ENCODE measurements at regions of chr1 and their contacts with region 1.

Region 1: DNA sequence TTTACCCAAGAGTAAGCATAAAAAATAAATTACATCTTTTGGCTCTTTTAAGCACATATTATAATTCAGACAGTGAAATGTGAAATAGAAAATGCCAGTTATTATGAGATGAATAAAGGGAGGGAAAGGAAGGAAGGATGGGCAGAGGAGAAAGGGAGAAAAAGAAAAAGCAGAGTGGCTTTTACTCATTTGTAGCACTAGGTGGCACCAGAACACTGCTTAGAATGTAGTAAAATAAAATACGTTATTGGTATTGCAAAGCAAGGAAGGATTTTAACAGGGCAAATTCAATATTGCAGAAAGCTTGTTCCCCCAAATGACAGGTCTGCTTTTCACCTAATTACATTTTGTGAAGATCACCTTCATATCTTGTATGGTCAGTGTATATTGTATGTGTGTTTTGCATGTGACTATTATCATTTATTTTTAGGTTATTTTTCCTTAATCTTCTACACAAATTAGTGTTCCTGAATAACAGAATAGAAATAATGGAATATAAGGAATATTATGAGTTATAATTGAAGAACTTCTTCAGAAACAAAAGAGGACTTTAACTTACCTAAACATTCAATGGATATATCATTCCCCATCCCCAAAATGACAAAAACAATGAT is 9.1 kb upstream of the PCNX2 start:
- DNase-seq: no peak
- ATAC-seq: peak; percentile 80
- H3K4me3 ChIP-seq: no peak overlapping the region
- H3K27ac ChIP-seq: no peak overlapping the region
- H3K4me1 ChIP-seq: no peaks in the 10 kb centered on the region
- H3K27me3 ChIP-seq: no peaks in the 10 kb centered on the region
- CTCF ChIP-seq: peak; percentile 68 to 83 (median 69); a peak in 5 of 6 replicates
- POLR2A ChIP-seq: no peak
- RAD21 ChIP-seq: peak; percentile 91

Region 2: DNA sequence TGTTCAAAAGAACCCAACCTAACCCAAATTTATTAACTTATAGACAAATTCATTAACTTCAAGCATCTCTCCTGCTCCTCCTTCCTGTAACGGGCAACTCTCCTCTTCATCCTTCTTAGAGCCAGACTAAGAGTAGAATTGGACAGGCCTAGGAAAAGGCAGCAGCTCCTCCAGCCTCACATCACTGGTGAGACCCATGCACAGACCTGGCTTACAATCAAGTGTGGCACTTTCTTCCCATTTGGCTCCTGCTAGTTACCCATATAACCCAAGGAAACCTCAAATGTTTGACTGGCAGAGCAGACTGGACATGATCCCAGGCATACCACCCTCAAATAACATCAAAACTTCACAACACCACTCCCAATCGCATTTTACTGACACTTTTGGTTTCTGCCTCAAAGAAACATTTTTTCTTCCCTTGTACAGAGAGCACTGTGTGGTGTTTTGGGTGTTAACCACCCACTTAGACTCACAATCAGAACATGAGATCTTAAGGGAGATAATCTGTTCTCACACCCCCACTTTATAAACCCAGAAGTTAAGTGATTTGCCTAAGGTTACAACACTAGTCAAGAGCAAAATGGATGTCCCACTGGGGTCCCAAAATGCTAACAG is 776.0 kb before region 1 on chr1:
- CTCF ChIA-PET with region 1: no interaction called
- POLR2A ChIA-PET with region 1: no interaction called
- RAD21 ChIA-PET with region 1: no interaction called
- intact Hi-C with region 1: no loop called
- DNase-seq: no peak
- ATAC-seq: no peak
- H3K4me3 ChIP-seq: no peak overlapping the region
- H3K27ac ChIP-seq: no peak overlapping the region
- H3K4me1 ChIP-seq: peaks cover 18 to 42% of the 10 kb centered on the region in 2 experiments
- H3K27me3 ChIP-seq: no peaks in the 10 kb centered on the region
- CTCF ChIP-seq: no peak
- POLR2A ChIP-seq: no peak
- RAD21 ChIP-seq: no peak

Region 3: DNA sequence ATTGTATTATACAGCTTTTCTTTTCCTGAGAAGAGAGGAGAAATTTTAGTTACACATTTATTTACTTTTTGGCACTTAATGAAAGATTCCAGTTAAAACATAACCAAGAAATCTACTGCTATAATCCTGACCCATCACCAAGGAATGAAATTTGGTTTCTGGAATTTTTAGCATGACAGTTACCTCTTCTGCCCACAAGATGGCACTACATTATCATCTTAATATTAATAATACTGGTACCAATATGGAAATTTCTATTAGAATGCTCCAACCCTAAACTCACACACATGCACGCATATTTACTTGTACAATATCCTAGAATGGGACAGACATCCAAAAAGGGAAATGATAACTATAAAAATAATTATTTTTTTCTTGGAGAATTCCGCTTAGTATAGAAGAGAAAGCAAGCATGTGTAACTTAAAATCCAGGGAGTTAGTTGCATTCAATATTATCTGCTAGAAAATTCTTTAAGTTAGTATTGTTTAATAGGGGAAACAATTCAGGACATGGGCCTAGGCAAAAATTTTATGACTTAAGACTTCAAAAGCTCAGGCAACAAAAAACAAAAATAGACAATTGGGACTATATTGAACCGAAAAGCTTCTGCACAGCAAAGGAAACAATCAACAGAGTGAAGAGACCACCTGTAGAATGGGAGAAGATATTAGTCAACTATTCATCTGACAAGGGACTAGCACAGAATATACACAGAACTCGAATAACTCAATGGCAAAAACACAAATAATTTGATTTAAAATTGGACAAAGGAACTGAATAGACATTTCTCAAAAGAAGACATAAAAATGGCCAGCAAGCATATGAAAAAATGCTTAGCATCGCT is 60.3 kb after region 1 on chr1:
- CTCF ChIA-PET with region 1: no interaction called
- POLR2A ChIA-PET with region 1: no interaction called
- RAD21 ChIA-PET with region 1: no interaction called
- intact Hi-C with region 1: loop called (anchors 5 kb)
- DNase-seq: no peak
- ATAC-seq: no peak
- H3K4me3 ChIP-seq: no peak overlapping the region
- H3K27ac ChIP-seq: no peak overlapping the region
- H3K4me1 ChIP-seq: peaks cover 25 to 37% of the 10 kb centered on the region in 2 experiments
- H3K27me3 ChIP-seq: no peaks in the 10 kb centered on the region
- CTCF ChIP-seq: peak; percentile 43 to 72 (median 51); a peak in 5 of 6 replicates
- POLR2A ChIP-seq: no peak
- RAD21 ChIP-seq: peak; percentile 63

Region 4: GRCh38 chr1:233424779-233425178 is 120.2 kb after region 1 on chr1:
- CTCF ChIA-PET with region 1: no interaction called
- POLR2A ChIA-PET with region 1: no interaction called
- RAD21 ChIA-PET with region 1: no interaction called
- intact Hi-C with region 1: loop called (anchors 5 kb)
- DNase-seq: peak; percentile 21
- ATAC-seq: peak; percentile 80
- H3K4me3 ChIP-seq: peak overlapping the region in 1 of 2 experiments; percentile 21; a peak in 1 of 4 replicates
- H3K27ac ChIP-seq: no peak overlapping the region
- H3K4me1 ChIP-seq: no peaks in the 10 kb centered on the region
- H3K27me3 ChIP-seq: no peaks in the 10 kb centered on the region
- CTCF ChIP-seq: peak; percentile 14 to 45 (median 43); a peak in 4 of 6 replicates
- POLR2A ChIP-seq: no peak
- RAD21 ChIP-seq: peak; percentile 43

Region 5: DNA sequence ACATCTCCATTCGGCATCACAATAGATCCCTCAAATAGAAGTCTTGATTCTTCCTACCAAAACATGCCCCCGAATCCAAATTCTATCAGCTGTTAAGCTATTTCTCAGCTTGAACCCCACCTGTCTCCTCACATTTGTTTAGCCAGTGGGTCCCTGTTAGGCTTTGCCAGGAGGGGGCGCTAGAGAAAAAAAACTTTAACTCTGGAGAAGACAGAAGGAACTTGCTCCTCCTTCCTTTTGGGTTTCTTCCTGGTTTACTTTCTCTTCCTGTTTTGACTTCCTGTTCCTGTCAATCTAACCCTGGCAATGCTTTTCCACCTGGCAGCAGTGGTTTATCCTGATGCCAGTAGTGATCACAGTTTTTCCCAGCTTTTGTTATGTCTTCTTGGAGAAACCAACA is 213.8 kb after region 1 on chr1:
- CTCF ChIA-PET with region 1: interaction called, 4 read pairs
- POLR2A ChIA-PET with region 1: no interaction called
- RAD21 ChIA-PET with region 1: no interaction called
- intact Hi-C with region 1: loop called (anchors 10 kb)
- DNase-seq: peak; percentile 65
- ATAC-seq: peak; percentile 78
- H3K4me3 ChIP-seq: peak overlapping the region; percentile 8 to 32; a peak in 1 of 4 replicates
- H3K27ac ChIP-seq: no peak overlapping the region
- H3K4me1 ChIP-seq: peaks cover 4 to 24% of the 10 kb centered on the region in 2 experiments; a peak in 2 of 4 replicates
- H3K27me3 ChIP-seq: no peaks in the 10 kb centered on the region
- CTCF ChIP-seq: peak; percentile 86 to 93 (median 90)
- POLR2A ChIP-seq: peak; percentile 40
- RAD21 ChIP-seq: peak; percentile 82

Region 6: GRCh38 chr1:234065794-234066447 is 761.3 kb after region 1 on chr1:
- CTCF ChIA-PET with region 1: interaction called, 4 read pairs
- POLR2A ChIA-PET with region 1: no interaction called
- RAD21 ChIA-PET with region 1: no interaction called
- intact Hi-C with region 1: loop called (anchors 2 kb)
- DNase-seq: peak; percentile 58
- ATAC-seq: peak; percentile 97
- H3K4me3 ChIP-seq: no peak overlapping the region
- H3K27ac ChIP-seq: no peak overlapping the region
- H3K4me1 ChIP-seq: no peaks in the 10 kb centered on the region
- H3K27me3 ChIP-seq: no peaks in the 10 kb centered on the region
- CTCF ChIP-seq: peak; percentile 75 to 81 (median 76)
- POLR2A ChIP-seq: no peak
- RAD21 ChIP-seq: peak; percentile 91

Region 7: GRCh38 chr1:234309598-234310459 is 1005.2 kb after region 1 on chr1:
- CTCF ChIA-PET with region 1: interaction called, 3 read pairs
- POLR2A ChIA-PET with region 1: no interaction called
- RAD21 ChIA-PET with region 1: no interaction called
- intact Hi-C with region 1: loop called (anchors 10 kb)
- DNase-seq: peak; percentile 38
- ATAC-seq: peak; percentile 96
- H3K4me3 ChIP-seq: no peak overlapping the region
- H3K27ac ChIP-seq: no peak overlapping the region
- H3K4me1 ChIP-seq: 0 out of 4 replicates have a peak, but pooled peaks cover 0 to under 1% of the 10 kb centered on the region in 2 experiments
- H3K27me3 ChIP-seq: no peaks in the 10 kb centered on the region
- CTCF ChIP-seq: peak; percentile 77 to 92 (median 91)
- POLR2A ChIP-seq: no peak
- RAD21 ChIP-seq: peak; percentile 75

Measured in HCT116 (cell line).